Endothelial cell of umbilical vein (primary cell): ENCODE measurements at regions of chr19 and their contacts with region 1.

Region 1: GRCh38 chr19:46076951-46077816 is 36.4 kb upstream of the IGFL4 start:
- DNase-seq: peak; percentile 82
- H3K4me3 ChIP-seq: peak overlapping the region in 1 of 3 experiments; percentile 17
- H3K27ac ChIP-seq: no peak overlapping the region
- H3K4me1 ChIP-seq: peaks cover 4% of the 10 kb centered on the region
- H3K27me3 ChIP-seq: peaks cover 31 to 45% of the 10 kb centered on the region in 2 experiments
- CTCF ChIP-seq: peak; percentile 97 to 98
- POLR2A ChIP-seq: no peak

Region 2: DNA sequence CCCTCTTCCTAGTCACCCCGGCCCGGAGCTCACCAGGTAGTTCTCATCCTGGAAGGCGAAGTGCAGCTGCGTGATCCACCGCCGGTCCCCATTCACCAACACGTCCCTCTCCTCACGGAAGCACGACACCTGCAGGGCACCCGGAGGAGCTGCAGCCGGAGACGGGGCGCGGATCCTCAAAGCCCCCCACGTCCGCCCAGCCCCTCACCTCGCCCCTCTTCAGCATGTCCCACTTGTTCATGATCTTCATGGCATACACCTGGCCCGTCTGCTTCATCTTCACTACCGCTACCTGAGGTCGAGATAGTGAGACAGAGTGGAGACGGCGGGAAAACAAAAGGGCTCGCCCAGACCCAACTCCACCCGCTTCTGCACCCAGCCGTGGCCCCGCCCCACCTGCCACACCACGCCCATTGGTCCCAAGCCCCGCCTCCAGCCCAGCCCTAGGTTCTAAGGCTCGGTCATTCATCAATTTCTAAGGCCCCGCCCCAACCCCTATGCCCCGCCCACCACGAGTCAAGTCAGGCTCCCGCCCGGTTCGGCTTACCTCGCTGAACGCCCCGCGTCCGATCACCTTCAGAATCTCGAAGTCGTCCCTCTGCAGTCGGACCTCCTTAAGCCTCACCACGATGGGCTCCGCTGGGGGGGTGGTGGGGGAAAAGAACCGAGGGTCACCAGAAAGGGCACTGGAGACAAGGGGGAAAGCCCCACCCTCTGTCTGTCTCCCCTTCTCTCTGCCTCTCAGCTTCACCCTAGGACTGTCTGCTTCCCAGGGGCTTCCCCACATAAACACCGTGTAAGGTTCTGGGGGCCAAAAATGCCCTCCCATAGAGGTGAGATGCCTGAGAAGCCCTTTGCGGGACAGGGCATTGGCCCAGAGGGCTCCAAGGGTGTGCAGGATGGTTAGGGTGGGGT is 297.7 kb before region 1 on chr19:
- CTCF ChIA-PET with region 1: no interaction called
- POLR2A ChIA-PET with region 1: no interaction called
- dilution Hi-C with region 1: no loop called
- intact Hi-C with region 1: no loop called
- DNase-seq: peak; percentile 84
- H3K4me3 ChIP-seq: no peak overlapping the region
- H3K27ac ChIP-seq: no peak overlapping the region
- H3K4me1 ChIP-seq: peaks cover 5% of the 10 kb centered on the region
- H3K27me3 ChIP-seq: no peaks in the 10 kb centered on the region
- CTCF ChIP-seq: peak; percentile 51 to 67
- POLR2A ChIP-seq: no peak

Region 3: GRCh38 chr19:45852145-45852750 is 224.9 kb before region 1 on chr19:
- CTCF ChIA-PET with region 1: no interaction called
- POLR2A ChIA-PET with region 1: no interaction called
- dilution Hi-C with region 1: no loop called
- intact Hi-C with region 1: no loop called
- DNase-seq: no peak
- H3K4me3 ChIP-seq: no peak overlapping the region
- H3K27ac ChIP-seq: no peak overlapping the region
- H3K4me1 ChIP-seq: no peaks in the 10 kb centered on the region
- H3K27me3 ChIP-seq: no peaks in the 10 kb centered on the region
- CTCF ChIP-seq: no peak
- POLR2A ChIP-seq: no peak

Region 4: DNA sequence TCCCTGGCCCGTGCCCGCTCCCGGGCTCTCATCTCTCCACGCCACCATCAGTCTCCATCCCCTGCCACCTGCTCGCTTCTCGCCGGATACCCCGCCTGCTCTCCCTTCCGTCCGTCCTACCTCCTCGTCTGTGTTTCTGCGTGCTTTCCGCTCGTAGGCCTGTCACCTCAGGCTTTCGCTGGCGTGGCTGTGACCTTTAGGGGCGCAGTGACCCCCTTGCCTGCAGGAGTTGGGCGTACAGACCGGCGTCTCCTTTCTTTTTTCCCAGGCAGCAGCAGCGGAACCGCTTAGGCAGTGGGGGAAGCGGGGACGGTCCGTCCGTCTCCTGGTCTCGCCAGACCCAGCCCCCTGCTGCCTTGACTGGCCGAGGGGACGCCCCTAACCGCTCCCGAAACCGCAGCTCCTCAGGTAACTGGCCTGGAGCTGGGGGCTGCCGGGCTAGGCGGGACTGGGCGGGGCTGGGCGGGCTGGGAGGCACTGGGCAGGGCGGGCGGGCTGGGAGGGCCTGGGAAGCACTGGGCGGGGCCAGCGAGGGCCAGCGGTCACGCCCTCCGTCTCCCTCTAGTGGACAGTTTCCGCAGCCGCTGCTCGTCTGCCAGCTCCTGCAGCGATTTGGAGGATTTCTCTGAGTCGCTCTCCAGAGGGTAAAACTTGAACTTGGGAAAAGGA is 60.6 kb before region 1 on chr19:
- CTCF ChIA-PET with region 1: interaction called, 460 read pairs
- POLR2A ChIA-PET with region 1: no interaction called
- dilution Hi-C with region 1: no loop called
- intact Hi-C with region 1: no loop called
- DNase-seq: peak; percentile 76
- H3K4me3 ChIP-seq: peak overlapping the region; percentile 47 to 69 (median 59)
- H3K27ac ChIP-seq: no peak overlapping the region
- H3K4me1 ChIP-seq: peaks cover 11% of the 10 kb centered on the region
- H3K27me3 ChIP-seq: peaks cover 4 to 8% of the 10 kb centered on the region in 2 experiments
- CTCF ChIP-seq: peak; percentile 56 to 86
- POLR2A ChIP-seq: no peak

Region 5: GRCh38 chr19:46021531-46022041 is 55.6 kb before region 1 on chr19:
- CTCF ChIA-PET with region 1: interaction called, 460 read pairs
- POLR2A ChIA-PET with region 1: no interaction called
- dilution Hi-C with region 1: no loop called
- intact Hi-C with region 1: no loop called
- DNase-seq: no peak
- H3K4me3 ChIP-seq: no peak overlapping the region
- H3K27ac ChIP-seq: no peak overlapping the region
- H3K4me1 ChIP-seq: peaks cover 5% of the 10 kb centered on the region
- H3K27me3 ChIP-seq: peaks cover 2 to 5% of the 10 kb centered on the region in 2 experiments
- CTCF ChIP-seq: no peak
- POLR2A ChIP-seq: no peak

Region 6: DNA sequence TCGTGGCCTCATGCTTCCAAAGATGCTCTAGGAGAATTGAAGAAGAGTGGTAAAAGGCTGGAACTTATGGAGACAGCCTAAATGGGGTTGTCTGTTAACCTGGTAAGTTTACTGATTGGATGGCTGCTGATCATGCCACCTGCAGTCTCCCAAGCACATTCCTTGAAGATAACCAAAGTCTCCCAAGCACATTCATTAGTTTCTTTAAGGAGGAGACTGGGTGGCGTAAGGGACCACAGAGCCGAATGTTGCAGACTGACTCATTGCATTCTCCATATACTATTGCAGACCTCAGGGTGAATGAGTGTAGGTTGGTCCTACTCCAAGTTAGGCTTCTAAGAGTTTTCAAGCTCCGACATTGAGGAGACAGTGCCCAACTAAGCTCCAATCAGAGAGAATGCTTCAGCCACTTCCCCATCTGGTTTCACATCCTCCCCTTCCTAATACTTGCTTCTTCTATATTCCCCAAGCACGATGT is 47.5 kb after region 1 on chr19 and contains the start of gene IGFL3:
- CTCF ChIA-PET with region 1: interaction called, 4 read pairs
- POLR2A ChIA-PET with region 1: no interaction called
- dilution Hi-C with region 1: no loop called
- intact Hi-C with region 1: loop called (anchors 5 kb)
- DNase-seq: no peak
- H3K4me3 ChIP-seq: no peak within 1 kb of the TSS
- H3K27ac ChIP-seq: no peak within 1 kb of the TSS
- H3K4me1 ChIP-seq: no peaks in the 10 kb centered on the region
- H3K27me3 ChIP-seq: peaks cover 39 to 48% of the 10 kb centered on the region in 2 experiments
- CTCF ChIP-seq: no peak
- POLR2A ChIP-seq: no peak
- total RNA-seq, gene IGFL3: not detected in 2 replicates

Region 7: DNA sequence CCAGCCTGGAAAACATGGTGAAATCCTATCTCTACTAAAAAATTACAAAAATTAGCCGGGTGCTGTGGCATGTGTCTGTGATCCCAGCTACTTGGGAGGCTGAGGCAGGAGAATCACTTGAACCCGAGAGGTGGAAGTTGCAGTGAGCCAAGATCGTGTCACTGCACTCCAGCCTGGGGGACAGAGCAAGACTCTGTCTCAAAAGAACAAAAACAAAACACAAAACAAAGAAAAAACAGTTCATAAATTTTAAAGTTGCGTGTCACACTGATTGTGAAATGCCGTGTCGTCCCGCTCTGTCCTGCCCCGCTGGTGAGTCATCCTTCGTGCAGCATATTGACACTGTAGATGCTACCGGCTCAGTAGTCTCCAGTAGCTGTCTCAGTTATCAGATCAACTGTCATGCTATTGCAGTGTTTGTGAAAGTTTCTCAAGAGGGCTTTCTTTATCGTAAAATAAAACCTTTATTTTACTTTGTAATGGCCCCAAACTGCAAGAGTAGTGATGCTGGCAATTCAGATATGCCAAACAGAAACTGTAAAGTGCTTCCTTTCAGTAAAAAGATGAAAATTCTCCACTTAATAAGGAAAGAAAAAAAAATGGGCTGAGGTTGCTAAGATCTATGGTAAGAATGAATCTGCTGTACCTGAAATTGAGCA is 115.9 kb after region 1 on chr19:
- CTCF ChIA-PET with region 1: interaction called, 199 read pairs
- POLR2A ChIA-PET with region 1: no interaction called
- dilution Hi-C with region 1: no loop called
- intact Hi-C with region 1: loop called (anchors 1 kb)
- DNase-seq: no peak
- H3K4me3 ChIP-seq: no peak overlapping the region
- H3K27ac ChIP-seq: no peak overlapping the region
- H3K4me1 ChIP-seq: no peaks in the 10 kb centered on the region
- H3K27me3 ChIP-seq: peaks cover 3 to 19% of the 10 kb centered on the region in 2 experiments
- CTCF ChIP-seq: no peak
- POLR2A ChIP-seq: no peak

Region 8: DNA sequence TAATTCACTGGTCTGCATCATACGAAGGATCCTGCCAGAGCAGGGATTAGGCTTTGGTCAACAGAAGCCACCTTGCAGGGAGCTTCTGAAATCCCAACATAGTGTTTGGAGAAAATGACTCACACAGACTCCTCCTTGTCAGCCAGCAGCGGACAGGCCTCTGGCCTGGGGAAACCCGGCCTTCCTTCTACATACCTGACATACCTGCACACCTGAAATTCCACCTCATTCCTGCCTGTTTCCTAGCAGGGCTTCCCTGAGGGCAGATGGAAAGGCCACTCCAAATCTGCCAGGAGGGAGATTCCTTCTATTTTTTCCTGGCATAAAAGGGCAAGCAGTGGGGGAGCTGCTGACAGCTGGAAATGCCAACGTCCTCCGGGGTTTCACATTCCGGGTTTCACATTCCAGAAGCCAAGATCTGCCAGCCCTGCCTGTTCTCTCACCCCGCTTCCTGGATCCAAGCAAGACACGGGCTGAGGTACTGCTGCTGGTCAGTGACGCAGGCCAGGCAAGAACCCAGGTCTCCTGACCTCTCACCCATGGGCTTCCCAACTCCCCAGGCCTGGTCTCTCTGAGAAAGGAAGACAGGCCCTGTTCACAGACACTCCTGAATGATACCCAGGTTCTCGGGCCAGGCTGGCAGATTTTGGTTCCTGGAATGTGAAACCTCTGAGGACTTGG is 134.2 kb after region 1 on chr19:
- CTCF ChIA-PET with region 1: no interaction called
- POLR2A ChIA-PET with region 1: no interaction called
- dilution Hi-C with region 1: no loop called
- intact Hi-C with region 1: no loop called
- DNase-seq: peak; percentile 54
- H3K4me3 ChIP-seq: no peak overlapping the region
- H3K27ac ChIP-seq: no peak overlapping the region
- H3K4me1 ChIP-seq: no peaks in the 10 kb centered on the region
- H3K27me3 ChIP-seq: peaks cover 2 to 11% of the 10 kb centered on the region in 2 experiments
- CTCF ChIP-seq: no peak
- POLR2A ChIP-seq: no peak

Region 9: GRCh38 chr19:46265217-46265828 is 188.1 kb after region 1 on chr19:
- CTCF ChIA-PET with region 1: interaction called, 170 read pairs
- POLR2A ChIA-PET with region 1: no interaction called
- dilution Hi-C with region 1: no loop called
- intact Hi-C with region 1: loop called (anchors 1 kb)
- DNase-seq: peak; percentile 83
- H3K4me3 ChIP-seq: no peak overlapping the region
- H3K27ac ChIP-seq: no peak overlapping the region
- H3K4me1 ChIP-seq: peaks cover 6% of the 10 kb centered on the region
- H3K27me3 ChIP-seq: peaks cover 5 to 7% of the 10 kb centered on the region in 2 experiments
- CTCF ChIP-seq: peak; percentile 61 to 73
- POLR2A ChIP-seq: no peak

Region 10: GRCh38 chr19:46404055-46404752 is 327.0 kb after region 1 on chr19:
- CTCF ChIA-PET with region 1: no interaction called
- POLR2A ChIA-PET with region 1: no interaction called
- dilution Hi-C with region 1: no loop called
- intact Hi-C with region 1: loop called (anchors 1 kb)
- DNase-seq: no peak
- H3K4me3 ChIP-seq: no peak overlapping the region
- H3K27ac ChIP-seq: no peak overlapping the region
- H3K4me1 ChIP-seq: no peaks in the 10 kb centered on the region
- H3K27me3 ChIP-seq: peaks cover 30 to 31% of the 10 kb centered on the region in 2 experiments
- CTCF ChIP-seq: no peak
- POLR2A ChIP-seq: no peak